B cell (primary cell): ENCODE measurements at regions of chr6 and their contacts with region 1.

Region 1: DNA sequence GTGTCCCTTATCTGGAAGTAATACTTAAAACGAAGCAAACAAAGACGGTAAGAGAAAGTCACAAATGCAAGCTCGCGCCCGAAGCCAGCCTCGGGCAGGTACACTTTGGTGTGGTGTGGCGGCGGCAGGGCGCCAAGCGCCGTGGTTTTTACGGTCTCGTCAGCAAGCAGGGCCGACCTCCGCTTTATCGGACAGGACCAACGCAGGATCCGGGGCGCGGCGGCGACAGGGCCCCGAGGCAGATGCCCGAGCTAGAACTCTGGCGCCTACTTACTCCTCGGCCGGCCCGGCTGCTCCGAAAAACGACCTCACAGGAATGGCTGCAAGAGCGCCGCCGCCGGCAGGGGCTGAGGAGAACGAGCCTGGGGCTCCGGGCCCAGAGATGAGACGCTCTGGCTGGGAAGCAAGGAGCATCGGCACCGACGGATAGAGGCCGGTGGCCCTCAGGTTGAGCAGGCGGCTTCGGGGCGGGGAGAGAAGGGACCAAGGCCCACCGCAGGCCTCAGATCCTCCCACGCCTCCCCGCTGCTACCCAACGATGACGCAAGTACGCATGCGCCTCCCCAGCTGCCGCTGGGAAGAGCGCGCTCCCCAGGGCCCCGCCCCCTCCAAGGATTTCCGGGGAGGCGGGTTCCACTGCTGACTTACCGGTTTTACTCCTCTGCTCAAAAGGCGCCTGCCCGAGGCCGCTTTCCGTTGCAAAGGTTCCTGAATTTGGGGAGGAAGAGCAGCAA is 60.6 kb downstream of the FAM217A start:
- DNase-seq: peak; percentile 98
- ATAC-seq: peak; percentile 73
- H3K4me3 ChIP-seq: peak overlapping the region; percentile 71 to 91 (median 80)
- H3K4me3 Mint-ChIP-seq: peak overlapping the region; percentile 96
- H3K27ac ChIP-seq: peak overlapping the region; percentile 94 to 97
- H3K27ac Mint-ChIP-seq: peak overlapping the region; percentile 99
- H3K4me1 ChIP-seq: peaks cover 30 to 40% of the 10 kb centered on the region in 2 donors
- H3K4me1 Mint-ChIP-seq: peaks cover 70% of the 10 kb centered on the region
- H3K27me3 ChIP-seq: no peaks in the 10 kb centered on the region
- H3K27me3 Mint-ChIP-seq: no peaks in the 10 kb centered on the region
- CTCF ChIP-seq: peak; percentile 43

Region 2: GRCh38 chr6:3068329-3069214 is 949.8 kb before region 1 on chr6 and contains the start of gene RIPK1:
- CTCF ChIA-PET with region 1: no interaction called
- POLR2A ChIA-PET with region 1: no interaction called
- intact Hi-C with region 1: loop called (anchors 1 kb)
- DNase-seq: peak; percentile 95
- ATAC-seq: peak; percentile 73
- H3K4me3 ChIP-seq: peak within 1 kb of the TSS; percentile 55 to 87 (median 85)
- H3K4me3 Mint-ChIP-seq: peak within 1 kb of the TSS; percentile 98
- H3K27ac ChIP-seq: peak within 1 kb of the TSS; percentile 92 to 99
- H3K27ac Mint-ChIP-seq: peak within 1 kb of the TSS; percentile 99
- H3K4me1 ChIP-seq: peaks cover 17 to 23% of the 10 kb centered on the region in 2 donors
- H3K4me1 Mint-ChIP-seq: peaks cover 43% of the 10 kb centered on the region
- H3K27me3 ChIP-seq: no peaks in the 10 kb centered on the region
- H3K27me3 Mint-ChIP-seq: no peaks in the 10 kb centered on the region
- CTCF ChIP-seq: no peak
- total RNA-seq, gene RIPK1: 26.2 and 28.1 TPM in 2 replicates

Region 3: GRCh38 chr6:3456755-3457466 is 561.4 kb before region 1 on chr6 and contains the start of gene SLC22A23:
- CTCF ChIA-PET with region 1: no interaction called
- POLR2A ChIA-PET with region 1: no interaction called
- intact Hi-C with region 1: loop called (anchors 10 kb)
- DNase-seq: peak; percentile 81
- ATAC-seq: peak; percentile 80
- H3K4me3 ChIP-seq: peak within 1 kb of the TSS in 4 of 5 experiments; percentile 25 to 51 (median 45)
- H3K4me3 Mint-ChIP-seq: peak within 1 kb of the TSS; percentile 81
- H3K27ac ChIP-seq: no peak within 1 kb of the TSS
- H3K27ac Mint-ChIP-seq: peak within 1 kb of the TSS; percentile 42
- H3K4me1 ChIP-seq: peaks cover 23 to 24% of the 10 kb centered on the region in 2 donors
- H3K4me1 Mint-ChIP-seq: peaks cover 5% of the 10 kb centered on the region
- H3K27me3 ChIP-seq: peaks cover 0 to 58% (median 43%) of the 10 kb centered on the region in 4 experiments
- H3K27me3 Mint-ChIP-seq: peaks cover 38% of the 10 kb centered on the region
- CTCF ChIP-seq: peak; percentile 75
- total RNA-seq, gene SLC22A23: 0.75 and 1.4 TPM in 2 replicates

Region 4: DNA sequence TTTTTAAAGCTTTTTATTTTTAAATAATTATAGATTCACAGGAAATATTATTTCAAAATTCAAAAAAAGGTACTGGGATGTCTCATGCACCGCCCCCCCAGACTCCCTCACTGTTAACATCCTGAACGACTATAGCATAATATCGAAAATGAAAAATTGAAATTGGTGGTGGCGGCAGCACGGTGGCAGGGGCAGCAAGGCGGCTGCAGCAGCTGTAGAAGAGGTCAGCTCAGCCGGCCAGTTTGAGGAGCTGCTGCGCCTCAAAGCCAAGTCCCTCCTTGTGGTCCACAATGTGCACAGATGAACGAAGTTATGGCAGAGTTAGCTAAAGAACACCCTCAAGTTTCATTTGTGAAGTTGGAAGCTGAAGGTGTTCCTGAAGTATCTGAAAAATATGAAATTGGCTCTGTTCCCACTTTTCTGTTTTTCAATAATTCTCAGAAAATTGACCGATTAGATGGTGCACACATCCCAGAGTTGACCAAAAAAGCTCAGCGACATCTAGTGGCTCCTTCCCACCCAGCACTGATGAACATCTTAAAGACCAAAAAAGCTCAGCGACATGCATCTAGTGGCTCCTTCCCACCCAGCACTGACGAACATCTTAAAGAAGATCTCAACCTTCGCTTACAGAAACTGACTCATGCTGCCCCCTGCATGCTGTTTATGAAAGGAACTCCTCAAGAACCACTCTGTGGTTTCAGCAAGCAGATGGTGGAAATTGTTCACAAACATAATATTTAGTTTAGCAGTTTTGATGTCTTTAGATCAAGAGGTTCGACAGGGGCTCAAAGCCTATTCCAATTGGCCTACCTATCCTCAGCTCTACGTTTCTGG is 40.2 kb before region 1 on chr6:
- CTCF ChIA-PET with region 1: interaction called, 13 read pairs
- POLR2A ChIA-PET with region 1: no interaction called
- intact Hi-C with region 1: no loop called
- DNase-seq: peak; percentile 65
- ATAC-seq: peak; percentile 95
- H3K4me3 ChIP-seq: no peak overlapping the region
- H3K4me3 Mint-ChIP-seq: no peak overlapping the region
- H3K27ac ChIP-seq: no peak overlapping the region
- H3K27ac Mint-ChIP-seq: no peak overlapping the region
- H3K4me1 ChIP-seq: peaks cover 0 to 7% of the 10 kb centered on the region in 2 donors
- H3K4me1 Mint-ChIP-seq: peaks cover 4% of the 10 kb centered on the region
- H3K27me3 ChIP-seq: peaks cover 0 to 3% (median 0%) of the 10 kb centered on the region in 4 experiments
- H3K27me3 Mint-ChIP-seq: peaks cover 8% of the 10 kb centered on the region
- CTCF ChIP-seq: peak; percentile 70

Region 5: GRCh38 chr6:4155848-4156466 is 137.6 kb after region 1 on chr6:
- CTCF ChIA-PET with region 1: interaction called, 33 read pairs
- POLR2A ChIA-PET with region 1: interaction called, 5 read pairs
- intact Hi-C with region 1: loop called (anchors 2 kb)
- DNase-seq: peak; percentile 85
- ATAC-seq: peak; percentile 78
- H3K4me3 ChIP-seq: no peak overlapping the region
- H3K4me3 Mint-ChIP-seq: no peak overlapping the region
- H3K27ac ChIP-seq: no peak overlapping the region
- H3K27ac Mint-ChIP-seq: no peak overlapping the region
- H3K4me1 ChIP-seq: peaks cover 4 to 12% of the 10 kb centered on the region in 2 donors
- H3K4me1 Mint-ChIP-seq: peaks cover 31% of the 10 kb centered on the region
- H3K27me3 ChIP-seq: peaks cover 0 to 6% (median 0%) of the 10 kb centered on the region in 4 experiments
- H3K27me3 Mint-ChIP-seq: peaks cover 10% of the 10 kb centered on the region
- CTCF ChIP-seq: peak; percentile 94